Activated CD4-positive, alpha-beta T cell treated with anti-CD3 and anti-CD28 coated beads for 36 hours (primary cell): ENCODE measurements at regions of chr19 and their contacts with region 1.

Region 1: GRCh38 chr19:56594783-56595547 is at the start of gene ZNF71:
- DNase-seq: peak; percentile 94
- ATAC-seq: peak; percentile 98
- H3K4me3 Mint-ChIP-seq: peak within 1 kb of the TSS; percentile 87
- H3K27ac Mint-ChIP-seq: peak within 1 kb of the TSS; percentile 71
- H3K4me1 Mint-ChIP-seq: peaks cover 19% of the 10 kb centered on the region
- H3K27me3 Mint-ChIP-seq: no peaks in the 10 kb centered on the region
- total RNA-seq, gene ZNF71: 4.4 to 4.6 TPM

Region 2: GRCh38 chr19:56367829-56368711 is 226.9 kb before region 1 on chr19:
- CTCF ChIA-PET with region 1: no interaction called
- POLR2A ChIA-PET with region 1: no interaction called
- intact Hi-C with region 1: loop called in 1 of 2 experiments (anchors 1 kb)
- DNase-seq: peak; percentile 92
- ATAC-seq: peak; percentile 99
- H3K4me3 Mint-ChIP-seq: peak overlapping the region; percentile 95
- H3K27ac Mint-ChIP-seq: peak overlapping the region; percentile 89
- H3K4me1 Mint-ChIP-seq: peaks cover 19% of the 10 kb centered on the region
- H3K27me3 Mint-ChIP-seq: no peaks in the 10 kb centered on the region

Region 3: DNA sequence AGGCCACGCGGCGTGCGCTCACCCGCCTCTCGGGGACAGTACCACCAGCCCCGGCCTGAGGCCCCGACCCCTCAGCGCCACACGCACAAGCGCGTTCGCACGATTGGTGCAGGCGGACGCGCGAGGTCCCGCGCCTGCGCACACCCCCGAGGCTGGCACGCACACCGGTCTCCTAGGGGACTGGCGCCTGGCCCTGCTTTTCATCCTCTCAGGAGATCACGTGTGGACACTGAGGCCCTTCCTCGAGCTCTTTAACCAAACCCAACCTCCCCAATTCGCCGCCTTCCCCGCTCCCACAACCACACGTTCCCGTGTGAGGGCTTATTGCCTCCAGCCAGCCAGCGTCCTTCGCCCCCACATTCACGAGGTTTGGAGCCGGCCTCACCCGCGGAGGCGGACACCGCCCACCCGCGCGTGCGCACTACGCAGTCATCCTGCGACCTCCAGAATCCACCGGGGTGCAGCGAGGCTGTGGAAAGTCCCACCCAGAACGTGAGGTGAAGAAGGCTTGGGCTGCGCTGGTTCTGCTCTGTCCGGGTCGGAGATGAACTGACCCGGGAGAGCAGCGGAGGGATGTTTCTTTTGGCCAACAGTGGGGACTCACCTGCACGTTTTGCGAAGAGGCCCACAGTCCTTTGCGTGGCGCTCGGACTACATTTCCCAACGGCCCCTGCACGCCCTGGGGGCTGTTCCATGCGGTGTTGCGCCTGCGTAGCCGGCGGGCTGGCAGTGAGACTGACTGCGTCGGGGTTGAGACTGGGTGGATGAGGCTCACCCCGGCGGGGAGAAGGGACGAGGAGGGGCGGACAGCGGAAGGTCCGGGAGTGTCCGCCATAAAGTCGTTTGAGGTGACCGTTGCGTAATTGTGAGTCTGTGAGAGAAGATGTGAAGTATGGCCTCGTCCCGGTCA is 117.3 kb before region 1 on chr19:
- CTCF ChIA-PET with region 1: no interaction called
- POLR2A ChIA-PET with region 1: no interaction called
- intact Hi-C with region 1: loop called in 1 of 2 experiments (anchors 1 kb)
- DNase-seq: peak; percentile 86
- ATAC-seq: peak; percentile 87
- H3K4me3 Mint-ChIP-seq: peak overlapping the region; percentile 85
- H3K27ac Mint-ChIP-seq: peak overlapping the region; percentile 94
- H3K4me1 Mint-ChIP-seq: peaks cover 15% of the 10 kb centered on the region
- H3K27me3 Mint-ChIP-seq: peaks cover 13% of the 10 kb centered on the region

Region 4: DNA sequence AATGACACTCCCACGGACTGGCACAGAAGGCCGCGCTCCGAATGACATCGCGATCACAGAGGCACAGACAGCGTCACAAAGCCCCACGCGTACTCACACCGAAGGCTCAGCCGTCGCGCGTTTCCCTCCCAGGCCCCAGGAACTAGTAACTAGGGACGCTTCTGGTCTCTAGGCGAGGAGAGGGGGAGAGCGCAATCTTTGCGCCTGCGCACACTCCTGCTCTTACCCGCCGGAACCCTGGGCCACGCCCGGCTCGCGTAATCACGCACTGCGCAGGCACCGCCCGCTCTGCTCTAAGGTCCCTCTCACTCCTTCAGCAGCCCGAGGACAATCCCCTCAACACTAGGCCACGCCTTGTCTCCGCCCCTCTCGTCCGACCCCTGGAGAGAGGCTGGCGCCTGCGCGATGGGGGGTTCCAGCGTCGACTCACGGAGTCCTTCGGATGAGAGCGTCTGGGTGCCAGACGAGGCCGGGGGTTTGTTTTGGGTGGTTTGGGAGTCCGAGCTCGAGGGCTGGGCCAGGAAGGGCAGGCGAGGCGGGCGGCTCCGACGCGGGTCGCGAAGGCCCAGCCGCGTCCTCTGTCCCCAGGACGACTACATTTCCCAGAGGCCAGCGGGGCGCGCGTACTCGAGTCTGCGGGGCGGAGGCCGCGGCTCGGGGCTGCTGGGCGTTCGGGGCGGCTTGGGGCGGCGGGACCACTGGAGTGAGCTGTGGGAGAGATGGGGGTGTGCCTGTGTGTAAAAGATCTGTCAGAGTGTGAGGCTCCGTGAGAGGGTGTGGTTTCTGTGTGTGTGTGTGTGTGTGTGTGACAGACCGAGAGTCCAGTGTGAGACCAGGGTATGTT is 87.3 kb before region 1 on chr19 and contains the start of gene ZNF471:
- CTCF ChIA-PET with region 1: no interaction called
- POLR2A ChIA-PET with region 1: no interaction called
- intact Hi-C with region 1: loop called in 1 of 2 experiments (anchors 1 kb)
- DNase-seq: peak; percentile 96
- ATAC-seq: peak; percentile 99
- H3K4me3 Mint-ChIP-seq: no peak within 1 kb of the TSS
- H3K27ac Mint-ChIP-seq: peak within 1 kb of the TSS; percentile 12
- H3K4me1 Mint-ChIP-seq: peaks cover 5% of the 10 kb centered on the region
- H3K27me3 Mint-ChIP-seq: peaks cover 2% of the 10 kb centered on the region
- total RNA-seq, gene ZNF471: 1.4 to 1.5 TPM

Region 5: GRCh38 chr19:56567274-56568120 is 27.5 kb before region 1 on chr19 and contains the start of gene ZNF470:
- CTCF ChIA-PET with region 1: no interaction called
- POLR2A ChIA-PET with region 1: no interaction called
- intact Hi-C with region 1: loop called (anchors 1 kb)
- DNase-seq: peak; percentile 94
- ATAC-seq: peak; percentile 97
- H3K4me3 Mint-ChIP-seq: peak within 1 kb of the TSS; percentile 88
- H3K27ac Mint-ChIP-seq: peak within 1 kb of the TSS; percentile 92
- H3K4me1 Mint-ChIP-seq: peaks cover 16% of the 10 kb centered on the region
- H3K27me3 Mint-ChIP-seq: no peaks in the 10 kb centered on the region
- total RNA-seq, gene ZNF470: 5.0 to 5.6 TPM

Region 6: GRCh38 chr19:56671613-56671994 is 76.6 kb after region 1 on chr19 and contains the start of gene ZNF835:
- CTCF ChIA-PET with region 1: no interaction called
- POLR2A ChIA-PET with region 1: interaction called, 5 read pairs
- intact Hi-C with region 1: loop called in 1 of 2 experiments (anchors 1 kb)
- DNase-seq: peak; percentile 94
- ATAC-seq: peak; percentile 96
- H3K4me3 Mint-ChIP-seq: peak within 1 kb of the TSS; percentile 84
- H3K27ac Mint-ChIP-seq: peak within 1 kb of the TSS; percentile 87
- H3K4me1 Mint-ChIP-seq: peaks cover 11% of the 10 kb centered on the region
- H3K27me3 Mint-ChIP-seq: no peaks in the 10 kb centered on the region
- total RNA-seq, gene ZNF835: 2.8 to 4.5 TPM